Posterior vena cava (tissue), 2 donors: ENCODE measurements at regions of chr14 and their contacts with region 1.

Region 1: DNA sequence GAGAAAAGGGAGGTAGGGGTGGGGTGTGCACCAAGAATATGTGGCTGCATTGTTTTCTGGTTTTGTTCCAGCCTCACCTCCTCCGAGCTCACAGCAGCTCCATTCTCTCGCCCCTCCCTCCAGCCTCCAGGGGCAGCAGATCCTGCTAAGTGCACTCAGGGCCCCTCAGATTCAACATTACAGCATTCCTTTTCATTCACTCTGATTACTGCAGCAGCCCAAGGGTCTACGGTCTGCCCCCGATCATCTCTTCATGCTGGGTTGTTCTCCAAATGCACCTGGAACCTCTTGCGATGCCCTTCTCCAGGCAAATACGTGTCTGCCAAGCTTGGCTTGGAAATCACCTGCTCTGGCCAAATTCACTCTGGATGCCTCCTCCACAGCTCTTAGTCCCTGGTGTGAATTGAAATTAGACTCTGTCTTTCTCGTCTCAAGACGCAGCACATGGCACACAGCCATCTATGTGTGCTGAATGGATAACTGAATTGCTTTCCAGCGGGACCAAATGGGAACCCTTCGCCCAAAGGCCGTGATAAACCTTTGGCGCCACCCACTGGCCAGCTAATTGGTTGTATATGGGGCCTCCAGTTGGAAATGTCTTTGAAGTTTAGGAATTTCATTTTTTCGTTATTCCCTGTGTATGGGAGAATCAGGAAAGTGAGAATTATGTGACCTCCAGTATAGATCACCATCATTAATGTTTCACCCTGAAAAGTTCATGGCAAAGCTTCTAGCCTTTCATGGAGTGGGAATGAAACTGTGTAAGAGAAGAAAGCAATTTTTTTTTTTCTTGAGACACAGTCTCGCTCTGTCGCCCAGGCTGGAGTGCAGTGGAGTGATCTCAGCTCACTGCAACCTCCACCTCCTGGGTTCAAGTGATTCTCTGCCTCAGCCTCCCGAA is 9.6 kb upstream of the HSP90AA1 start:
- DNase-seq: peak; percentile 94

Region 2: DNA sequence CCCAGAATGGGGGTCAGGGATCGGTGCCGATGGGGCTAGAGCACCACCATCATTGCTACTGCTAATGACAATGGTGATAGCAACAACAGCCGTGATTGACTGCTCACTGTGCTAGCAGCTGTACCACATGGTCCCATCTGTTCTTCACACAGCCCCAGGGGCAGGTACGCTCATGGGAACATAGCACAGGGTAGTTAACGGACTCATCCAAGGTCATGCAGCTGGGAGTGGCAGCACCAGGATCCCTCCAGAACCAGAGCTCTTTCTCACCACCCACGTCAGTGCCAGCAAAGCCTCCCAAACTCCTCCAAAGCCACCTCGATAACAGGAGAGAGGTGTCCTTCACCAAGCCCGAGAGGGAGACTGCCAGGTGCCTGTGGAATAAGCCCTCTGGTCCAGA is 143.3 kb before region 1 on chr14:
- intact Hi-C with region 1: loop called in 1 of 2 experiments (anchors 10 kb)
- DNase-seq: peak; percentile 56

Region 3: GRCh38 chr14:101964297-101965144 is 131.9 kb before region 1 on chr14 and contains the start of gene DYNC1H1:
- intact Hi-C with region 1: loop called (anchors 10 kb)
- DNase-seq: peak; percentile 98
- total RNA-seq, gene DYNC1H1: 421 to 510 TPM

Region 4: DNA sequence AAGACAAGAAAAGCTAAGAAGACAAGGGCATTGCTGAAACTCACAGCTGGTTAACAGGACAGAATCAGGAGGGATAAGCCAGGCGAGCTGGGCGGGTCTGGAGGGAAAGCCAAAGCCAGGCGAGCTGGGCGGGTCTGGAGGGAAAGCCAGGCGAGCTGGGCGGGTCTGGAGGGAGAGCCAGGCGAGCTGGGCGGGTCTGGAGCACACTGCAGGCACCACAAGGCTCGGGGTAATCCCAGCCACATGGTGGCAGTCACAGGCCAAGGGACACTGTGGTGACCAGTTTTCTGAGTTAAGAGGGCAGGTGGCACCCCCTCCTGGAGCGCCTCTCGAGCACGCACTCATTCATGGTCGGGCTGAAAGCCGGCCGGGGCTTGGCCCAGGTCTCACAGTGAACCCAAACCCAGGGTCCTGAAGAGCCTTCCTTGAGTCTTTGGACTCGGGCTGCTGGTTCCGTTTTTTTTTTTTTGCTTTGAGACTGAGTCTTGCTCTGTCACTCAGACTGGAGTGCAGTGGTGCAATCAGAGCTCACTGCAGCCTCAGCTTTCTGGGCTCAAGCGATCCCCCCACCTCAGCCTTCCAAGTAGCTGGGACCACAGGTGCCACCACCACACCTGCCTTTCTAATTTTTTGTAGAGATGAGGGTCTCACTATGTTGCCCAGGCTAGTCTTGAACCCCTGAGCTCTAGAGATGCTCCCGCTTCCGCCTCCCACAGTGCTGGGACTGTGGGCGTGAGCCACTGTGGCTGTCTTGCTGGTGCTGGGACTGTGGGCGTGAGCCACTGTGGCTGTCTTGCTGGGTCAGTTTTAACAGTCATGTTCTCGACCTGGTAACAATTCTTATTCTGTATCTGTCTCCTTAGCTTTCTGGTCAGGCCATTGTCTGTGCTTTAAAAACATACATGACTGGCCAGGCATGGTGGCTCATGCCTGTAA is 49.9 kb before region 1 on chr14:
- intact Hi-C with region 1: loop called in 1 of 2 experiments (anchors 10 kb)
- DNase-seq: peak; percentile 93

Region 5: GRCh38 chr14:102063091-102063802 is 33.2 kb before region 1 on chr14:
- intact Hi-C with region 1: loop called in 1 of 2 experiments (anchors 2 kb)
- DNase-seq: peak; percentile 95

Region 6: GRCh38 chr14:102159841-102160240 is 63.4 kb after region 1 on chr14:
- intact Hi-C with region 1: loop called in 1 of 2 experiments (anchors 2 kb)
- DNase-seq: no peak